Adrenal gland (tissue), 19 donors: ENCODE measurements at regions of chr7 and their contacts with region 1.

Region 1: GRCh38 chr7:70693686-70694360 is 438.1 kb upstream of the GALNT17 start:
- DNase-seq: peak; percentile 52 to 74 (median 66)
- H3K4me3 ChIP-seq: peak overlapping the region in 2 of 4 donors; percentile 59 to 85
- H3K27ac ChIP-seq: peak overlapping the region in 2 of 5 donors; percentile 59 to 69
- H3K4me1 ChIP-seq: peaks cover 0 to 10% of the 10 kb centered on the region in 2 donors
- H3K27me3 ChIP-seq: no peaks in the 10 kb centered on the region
- CTCF ChIP-seq: peak in 5 of 6 experiments; percentile 15 to 42 (median 27)
- POLR2A ChIP-seq: peak in 1 of 2 donors; percentile 24

Region 2: DNA sequence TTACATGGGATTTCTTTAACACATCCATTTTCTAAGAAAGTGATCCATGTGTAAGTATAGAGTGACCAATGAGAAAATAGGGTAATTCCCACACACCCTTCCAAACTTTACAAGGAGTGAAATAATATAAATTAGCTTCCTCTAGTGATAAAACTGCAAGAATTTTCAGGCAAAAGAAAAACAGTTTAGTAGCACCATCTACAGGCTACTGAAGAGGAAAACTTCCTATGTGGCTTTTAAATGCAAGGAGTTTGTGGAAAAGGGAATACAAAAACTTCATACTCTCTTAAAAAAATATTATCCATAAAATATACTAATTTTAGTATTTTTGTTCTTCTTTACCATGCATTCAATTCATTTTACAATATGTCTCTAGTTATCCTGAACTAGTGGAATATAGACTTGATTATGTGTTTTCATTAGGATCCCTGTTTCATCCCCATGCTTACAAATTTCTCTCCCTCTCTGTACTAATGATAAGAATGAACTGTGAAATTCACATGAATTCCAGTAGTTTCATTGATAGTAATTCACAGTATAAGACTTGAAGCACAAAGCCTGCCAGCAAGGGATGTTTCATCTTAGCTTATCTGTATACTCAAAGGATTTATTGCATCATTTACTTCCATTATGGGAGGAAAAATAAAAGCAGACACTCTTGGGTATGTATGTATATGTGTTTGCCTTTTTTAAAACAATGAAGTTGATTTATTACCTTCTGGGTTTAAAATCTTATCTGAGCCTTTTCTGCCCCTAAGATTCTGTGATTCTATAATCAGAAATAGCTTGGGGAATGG is 652.7 kb before region 1 on chr7:
- intact Hi-C with region 1: loop called in 1 of 2 experiments (anchors 10 kb)
- DNase-seq: no peak
- H3K4me3 ChIP-seq: no peak overlapping the region
- H3K27ac ChIP-seq: no peak overlapping the region
- H3K4me1 ChIP-seq: peaks cover 0 to 22% of the 10 kb centered on the region in 2 donors
- H3K27me3 ChIP-seq: no peaks in the 10 kb centered on the region
- CTCF ChIP-seq: peak; percentile 12 to 56 (median 38)
- POLR2A ChIP-seq: no peak